ENCODE measurements at regions of chr20 and their contacts with region 1.

Region 1: DNA sequence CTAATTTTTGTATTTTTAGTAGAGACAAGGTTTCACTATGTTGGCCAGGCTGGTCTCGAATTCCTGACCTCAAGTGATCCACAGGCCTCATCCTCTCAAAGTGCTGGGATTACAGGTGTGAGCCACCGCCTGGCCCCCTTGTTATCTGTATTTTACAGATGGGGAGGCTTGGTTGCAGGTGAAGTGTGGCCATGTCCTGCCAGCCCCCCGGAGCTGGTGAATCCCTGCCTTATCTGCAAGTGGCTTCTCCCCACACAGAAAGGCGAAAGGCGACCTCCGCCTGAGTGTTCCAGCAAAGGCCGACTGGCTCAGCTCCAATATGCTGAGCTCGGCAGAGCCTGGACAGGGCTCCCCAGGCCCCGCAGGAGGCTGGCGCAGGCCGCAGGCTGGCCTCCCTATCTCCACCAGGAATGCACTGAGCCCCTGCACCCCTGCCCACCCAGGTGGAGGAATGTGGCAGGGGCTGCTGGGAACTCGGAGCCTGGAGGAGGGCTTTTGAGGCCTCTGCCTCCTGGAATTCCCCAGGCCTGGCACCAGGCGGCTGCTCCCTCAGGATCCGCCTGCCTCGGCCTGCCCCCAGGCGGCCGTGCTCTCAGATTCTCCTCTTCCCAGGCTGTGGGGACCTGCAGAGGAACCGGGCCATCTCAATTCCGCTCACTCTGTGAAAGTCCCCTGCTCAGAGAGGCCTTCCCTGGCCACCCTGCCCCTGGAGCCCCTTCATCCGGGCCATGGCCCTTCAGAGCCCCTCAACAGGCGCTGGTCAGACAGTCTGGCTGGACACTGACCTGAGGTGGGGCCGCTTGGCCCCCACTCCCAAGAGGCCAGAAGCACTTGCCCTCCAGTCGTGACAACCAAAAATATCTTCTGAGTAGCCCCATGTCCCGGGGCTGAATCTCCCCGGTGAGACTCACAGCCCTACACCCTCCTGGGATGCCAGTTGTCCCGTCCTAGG is 9.3 kb upstream of the LAMA5 start:
- DNase-seq: peak in 3 of 6 donors; percentile 63 to 77 (median 64)
- ATAC-seq: peak; percentile 64 to 77 (median 72)
- H3K4me3 ChIP-seq: no peak overlapping the region
- H3K27ac ChIP-seq: peak overlapping the region; percentile 32 to 63 (median 48)
- H3K4me1 ChIP-seq: peaks cover 0 to 10% (median 5%) of the 10 kb centered on the region in 3 donors
- H3K27me3 ChIP-seq: no peaks in the 10 kb centered on the region
- CTCF ChIP-seq: no peak

Region 2: GRCh38 chr20:62237801-62238571 is 138.4 kb before region 1 on chr20 and contains the start of gene OSBPL2:
- intact Hi-C with region 1: no loop called
- DNase-seq: peak; percentile 99 to 100 (median 100)
- ATAC-seq: peak; percentile 91 to 97 (median 92)
- H3K4me3 ChIP-seq: peak within 1 kb of the TSS; percentile 15 to 70 (median 60)
- H3K27ac ChIP-seq: peak within 1 kb of the TSS; percentile 83 to 86 (median 85)
- H3K4me1 ChIP-seq: peaks cover 31 to 48% (median 31%) of the 10 kb centered on the region in 3 donors
- H3K27me3 ChIP-seq: no peaks in the 10 kb centered on the region
- CTCF ChIP-seq: no peak
- total RNA-seq, gene OSBPL2: 42.4 to 56.8 (median 49.2) TPM

Region 3: GRCh38 chr20:62305149-62305764 is 71.1 kb before region 1 on chr20:
- intact Hi-C with region 1: loop called in 2 of 3 experiments (anchors 5 kb)
- DNase-seq: peak in 5 of 6 donors; percentile 81 to 91 (median 85)
- ATAC-seq: peak; percentile 25 to 58 (median 44)
- H3K4me3 ChIP-seq: peak overlapping the region in 2 of 4 donors; percentile 85 to 89
- H3K27ac ChIP-seq: peak overlapping the region in 3 of 4 donors; percentile 25 to 46 (median 29)
- H3K4me1 ChIP-seq: peaks cover 8 to 22% (median 11%) of the 10 kb centered on the region in 3 donors
- H3K27me3 ChIP-seq: no peaks in the 10 kb centered on the region
- CTCF ChIP-seq: no peak